ENCODE measurements at regions of chr1 and their contacts with region 1.

Region 1: DNA sequence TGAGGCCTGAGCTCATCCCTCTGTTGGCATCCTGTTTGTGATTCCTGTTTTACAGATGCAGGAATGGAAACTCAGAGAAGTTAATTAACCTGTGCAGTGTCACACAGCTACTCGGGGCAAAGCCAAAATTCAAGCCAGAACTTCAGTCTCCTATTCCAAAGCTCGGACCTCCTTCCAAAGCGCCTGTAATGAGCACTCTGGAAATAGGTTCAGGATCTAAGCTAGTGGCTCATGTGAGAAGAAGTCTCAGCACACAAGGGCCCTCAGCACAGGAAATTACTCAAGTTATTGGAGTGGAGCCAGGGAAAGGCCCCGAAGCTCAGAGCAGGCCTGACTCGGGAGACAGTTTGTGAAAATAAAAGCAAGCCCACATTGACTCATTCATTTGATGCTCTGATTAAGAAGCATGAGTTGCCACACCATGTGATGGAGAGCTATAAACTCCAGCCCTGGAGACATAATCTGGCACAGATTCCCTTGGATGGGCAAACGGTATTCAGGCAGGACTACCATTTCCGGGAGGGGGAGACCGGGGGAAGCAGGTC is 50.6 kb upstream of the LYST start:
- DNase-seq: peak; percentile 99
- ATAC-seq: peak; percentile 90
- H3K4me3 ChIP-seq: peak overlapping the region in 1 of 2 experiments; percentile 0; a peak in 1 of 4 replicates
- H3K27ac ChIP-seq: peak overlapping the region; percentile 99
- H3K4me1 ChIP-seq: peaks cover 81% of the 10 kb centered on the region
- H3K27me3 ChIP-seq: no peaks in the 10 kb centered on the region
- CTCF ChIP-seq: no peak

Region 2: DNA sequence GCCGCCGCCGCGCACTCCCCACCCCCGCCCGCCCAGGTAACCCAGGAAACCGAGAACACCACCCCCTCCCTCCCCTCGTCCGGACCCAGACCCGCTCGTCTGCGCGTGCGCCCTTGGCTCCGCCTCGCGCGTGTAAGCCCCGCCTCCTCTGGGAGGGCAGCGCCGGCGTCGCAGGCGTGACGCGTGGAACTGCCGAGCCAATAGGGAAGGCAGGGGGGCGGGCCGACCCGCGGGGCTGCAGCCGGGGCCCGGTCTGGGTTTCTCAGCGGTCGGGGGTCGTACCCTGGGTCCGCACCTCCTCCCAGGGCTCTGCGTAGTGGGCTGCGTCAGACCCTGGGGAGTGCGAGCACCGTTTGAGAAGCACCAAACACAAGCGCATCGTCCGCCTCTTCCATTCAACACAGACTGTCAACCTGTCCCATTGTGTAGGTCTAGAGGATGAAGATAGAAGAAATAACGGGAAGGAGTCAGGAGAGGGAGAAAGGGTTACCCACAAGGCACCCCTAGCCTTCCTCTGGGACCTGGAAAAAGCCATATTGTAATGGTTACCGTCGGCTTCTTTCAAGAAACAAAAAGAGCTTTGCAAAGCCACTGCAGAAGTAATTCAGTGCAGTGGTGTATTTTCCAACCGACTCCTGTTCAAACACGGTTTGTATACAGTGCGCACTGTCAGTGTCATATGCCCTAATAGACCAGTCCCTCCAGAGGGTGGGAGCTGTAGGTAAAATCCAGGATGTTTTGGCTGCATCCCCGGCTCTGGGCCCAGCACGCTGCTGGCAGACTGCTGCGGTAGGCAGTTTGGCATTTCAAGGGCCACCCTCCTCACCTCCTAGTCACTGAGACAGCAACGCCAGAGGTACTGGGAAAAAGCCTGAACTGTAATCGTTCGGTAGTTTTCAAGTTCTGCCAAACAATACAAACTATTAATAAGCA is 50.2 kb before region 1 on chr1:
- CTCF ChIA-PET with region 1: no interaction called
- POLR2A ChIA-PET with region 1: interaction called, 7 read pairs
- in situ Hi-C with region 1: no loop called
- intact Hi-C with region 1: loop called (anchors 5 kb)
- DNase-seq: peak; percentile 75
- ATAC-seq: peak; percentile 89
- H3K4me3 ChIP-seq: peak overlapping the region; percentile 76 to 82
- H3K27ac ChIP-seq: peak overlapping the region; percentile 87
- H3K4me1 ChIP-seq: peaks cover 39% of the 10 kb centered on the region
- H3K27me3 ChIP-seq: no peaks in the 10 kb centered on the region
- CTCF ChIP-seq: no peak

Region 3: DNA sequence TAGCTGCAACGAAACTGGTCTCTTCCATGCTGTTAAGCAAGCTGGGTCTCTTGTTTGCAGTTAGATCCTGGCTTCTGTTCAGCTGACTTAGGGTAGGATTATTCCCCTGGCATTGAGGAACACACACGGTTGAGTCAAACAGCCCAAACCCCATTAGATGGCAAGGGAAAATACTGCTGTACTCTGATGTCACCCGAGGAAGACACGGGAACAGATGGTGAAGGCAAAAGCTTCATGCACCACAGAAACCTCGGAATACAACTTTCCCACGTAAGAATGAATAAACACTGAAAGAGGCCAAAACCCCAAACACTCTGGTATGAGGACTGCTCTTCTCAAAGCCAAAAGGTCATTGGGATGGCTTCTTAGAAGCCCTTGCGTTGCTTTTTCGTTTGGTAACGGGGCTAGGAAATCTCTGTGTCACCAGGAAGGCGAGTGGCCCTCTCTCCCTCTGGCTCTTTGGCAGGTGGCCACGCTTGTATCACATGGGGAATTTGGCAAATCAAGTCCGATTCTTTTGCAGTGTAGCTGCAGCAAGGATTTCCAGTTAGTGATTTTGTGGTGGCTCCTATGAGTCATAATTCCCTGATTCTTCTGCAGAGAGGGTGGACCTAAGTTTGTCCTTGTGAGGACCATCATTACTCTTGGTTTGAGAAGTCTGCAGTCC is 33.9 kb before region 1 on chr1:
- CTCF ChIA-PET with region 1: no interaction called
- POLR2A ChIA-PET with region 1: interaction called, 4 read pairs
- in situ Hi-C with region 1: no loop called
- intact Hi-C with region 1: loop called (anchors 5 kb)
- DNase-seq: peak; percentile 86
- ATAC-seq: peak; percentile 83
- H3K4me3 ChIP-seq: peak overlapping the region; percentile 45 to 92
- H3K27ac ChIP-seq: peak overlapping the region; percentile 99
- H3K4me1 ChIP-seq: peaks cover 54% of the 10 kb centered on the region
- H3K27me3 ChIP-seq: no peaks in the 10 kb centered on the region
- CTCF ChIP-seq: no peak

Region 4: DNA sequence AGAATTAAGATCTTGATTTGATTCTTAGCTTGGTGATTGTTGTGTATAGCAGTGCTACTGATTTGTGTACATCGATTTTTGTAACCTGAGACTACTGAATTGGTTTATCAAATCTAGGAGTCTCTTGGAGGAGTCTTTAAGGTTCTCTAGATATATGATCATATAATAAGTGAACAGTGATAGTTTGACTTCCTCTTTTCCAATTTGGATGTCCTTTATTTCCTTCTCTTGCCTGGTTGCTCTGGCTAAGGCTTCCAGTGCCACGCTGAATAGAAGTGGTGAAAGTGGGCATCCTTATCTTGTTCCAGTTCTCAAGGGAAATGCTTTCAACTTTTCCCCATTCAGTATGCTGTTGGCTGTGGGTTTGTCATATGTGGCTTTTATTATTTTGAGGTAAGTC is 10.9 kb after region 1 on chr1:
- CTCF ChIA-PET with region 1: no interaction called
- POLR2A ChIA-PET with region 1: no interaction called
- in situ Hi-C with region 1: no loop called
- intact Hi-C with region 1: no loop called
- DNase-seq: no peak
- ATAC-seq: no peak
- H3K4me3 ChIP-seq: no peak overlapping the region
- H3K27ac ChIP-seq: no peak overlapping the region
- H3K4me1 ChIP-seq: peaks cover 17% of the 10 kb centered on the region
- H3K27me3 ChIP-seq: no peaks in the 10 kb centered on the region
- CTCF ChIP-seq: no peak

Region 5: DNA sequence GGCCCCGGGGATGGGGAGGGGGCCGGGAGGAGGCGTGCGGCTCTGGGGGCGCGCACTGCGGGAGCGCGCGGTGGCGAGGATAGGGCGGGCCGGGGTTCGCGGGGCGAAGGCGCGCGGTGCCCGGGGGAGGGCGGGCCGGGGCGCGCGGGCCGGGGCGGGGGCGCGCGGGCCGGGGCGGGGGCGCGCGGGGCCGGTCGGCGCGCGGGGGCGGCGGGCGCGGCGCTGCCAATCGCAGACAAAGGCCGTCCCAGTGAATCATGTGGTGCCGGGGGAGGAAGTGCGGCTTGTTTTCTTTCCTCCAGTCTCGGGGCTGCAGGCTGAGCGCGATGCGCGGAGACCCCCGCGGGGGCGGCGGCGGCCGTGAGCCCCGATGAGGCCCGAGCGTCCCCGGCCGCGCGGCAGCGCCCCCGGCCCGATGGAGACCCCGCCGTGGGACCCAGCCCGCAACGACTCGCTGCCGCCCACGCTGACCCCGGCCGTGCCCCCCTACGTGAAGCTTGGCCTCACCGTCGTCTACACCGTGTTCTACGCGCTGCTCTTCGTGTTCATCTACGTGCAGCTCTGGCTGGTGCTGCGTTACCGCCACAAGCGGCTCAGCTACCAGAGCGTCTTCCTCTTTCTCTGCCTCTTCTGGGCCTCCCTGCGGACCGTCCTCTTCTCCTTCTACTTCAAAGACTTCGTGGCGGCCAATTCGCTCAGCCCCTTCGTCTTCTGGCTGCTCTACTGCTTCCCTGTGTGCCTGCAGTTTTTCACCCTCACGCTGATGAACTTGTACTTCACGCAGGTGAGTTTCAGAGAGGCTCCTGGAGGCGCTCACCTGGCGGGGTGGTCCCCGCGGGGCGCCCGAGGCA is 225.1 kb after region 1 on chr1 and contains the start of gene GPR137B:
- CTCF ChIA-PET with region 1: no interaction called
- POLR2A ChIA-PET with region 1: no interaction called
- in situ Hi-C with region 1: no loop called
- intact Hi-C with region 1: no loop called
- DNase-seq: no peak
- ATAC-seq: peak; percentile 74
- H3K4me3 ChIP-seq: peak within 1 kb of the TSS; percentile 81 to 84
- H3K27ac ChIP-seq: peak within 1 kb of the TSS; percentile 81
- H3K4me1 ChIP-seq: peaks cover 27% of the 10 kb centered on the region
- H3K27me3 ChIP-seq: peaks cover 11% of the 10 kb centered on the region
- CTCF ChIP-seq: no peak
- total RNA-seq, gene GPR137B: 25.3 TPM

Measured in Panc1 (cell line).